ENCODE measurements at regions of chr18 and their contacts with region 1.

Region 1: DNA sequence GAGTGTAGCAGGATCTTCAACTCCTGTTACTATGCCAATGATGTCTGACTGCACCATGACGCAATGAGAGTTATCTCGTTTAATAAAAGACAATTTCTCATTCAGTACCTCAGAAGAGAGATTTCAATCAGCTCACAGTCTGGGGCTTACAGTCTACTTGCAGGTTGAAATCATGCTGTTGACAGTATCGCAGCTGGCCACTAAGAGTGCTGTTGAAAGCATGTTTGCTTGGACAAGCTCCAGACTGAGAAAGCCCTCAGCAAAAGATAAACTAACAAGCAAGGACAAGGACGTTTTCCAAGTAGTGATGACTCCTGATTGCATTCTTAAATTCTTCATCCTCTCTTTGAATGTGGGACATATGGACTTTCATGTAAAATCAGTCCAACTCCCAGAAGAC is 145.2 kb upstream of the SYT4 start:
- DNase-seq: no peak
- ATAC-seq: peak in 1 of 2 donors; percentile 45
- H3K4me3 ChIP-seq: no peak overlapping the region
- H3K27ac ChIP-seq: no peak overlapping the region
- H3K4me1 ChIP-seq: no peaks in the 10 kb centered on the region
- H3K27me3 ChIP-seq: no peaks in the 10 kb centered on the region
- CTCF ChIP-seq: no peak

Region 2: DNA sequence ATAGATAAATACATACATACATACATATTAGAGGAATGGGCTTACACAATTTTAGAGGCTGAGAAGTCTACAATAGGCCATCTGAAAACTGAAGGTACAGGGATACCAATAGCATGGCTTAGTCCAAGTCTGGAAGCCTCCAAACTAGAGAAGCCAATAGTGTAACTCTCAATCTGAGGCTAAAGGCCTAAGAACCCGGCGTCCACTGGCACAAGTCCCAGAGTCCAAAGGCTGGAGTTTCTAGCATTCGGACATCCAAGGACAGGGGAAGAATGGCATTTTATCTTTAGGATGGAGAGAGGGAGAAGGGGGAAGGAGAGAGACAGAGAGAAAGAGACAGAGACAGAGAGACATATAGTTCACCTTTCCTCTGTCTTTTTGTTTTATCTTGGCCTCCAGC is 81.5 kb before region 1 on chr18:
- intact Hi-C with region 1: no loop called
- DNase-seq: no peak
- ATAC-seq: no peak
- H3K4me3 ChIP-seq: no peak overlapping the region
- H3K27ac ChIP-seq: no peak overlapping the region
- H3K4me1 ChIP-seq: no peaks in the 10 kb centered on the region
- H3K27me3 ChIP-seq: no peaks in the 10 kb centered on the region
- CTCF ChIP-seq: no peak

Region 3: DNA sequence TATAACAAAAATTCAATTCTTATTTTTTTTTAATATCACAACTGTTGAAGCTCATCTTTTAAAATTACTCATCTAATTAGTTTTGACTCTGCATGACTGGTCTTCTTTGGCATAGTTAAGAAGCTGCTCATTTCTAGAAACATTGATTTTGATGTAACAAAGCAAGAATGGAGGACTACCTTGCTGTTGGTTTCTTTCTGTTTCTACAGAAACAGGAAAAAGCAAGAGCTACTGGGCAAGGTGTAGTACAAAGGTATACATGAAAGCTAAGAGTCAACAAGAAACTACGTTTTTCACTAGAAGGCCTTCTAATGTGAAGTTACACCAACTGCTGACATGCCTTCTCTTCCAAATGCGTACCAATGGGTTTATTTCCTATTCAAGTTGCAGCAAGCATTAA is 54.6 kb before region 1 on chr18:
- intact Hi-C with region 1: loop called (anchors 10 kb)
- DNase-seq: no peak
- ATAC-seq: no peak
- H3K4me3 ChIP-seq: no peak overlapping the region
- H3K27ac ChIP-seq: no peak overlapping the region
- H3K4me1 ChIP-seq: no peaks in the 10 kb centered on the region
- H3K27me3 ChIP-seq: no peaks in the 10 kb centered on the region
- CTCF ChIP-seq: no peak